A673 (cell line): ENCODE measurements at regions of chr16 and their contacts with region 1.

Region 1: GRCh38 chr16:6066652-6067051 is 969.1 kb upstream of the EEF2KMT start:
- DNase-seq: no peak
- H3K4me3 ChIP-seq: no peak overlapping the region
- H3K27ac ChIP-seq: no peak overlapping the region
- H3K4me1 ChIP-seq: no peaks in the 10 kb centered on the region
- H3K27me3 ChIP-seq: no peaks in the 10 kb centered on the region
- CTCF ChIP-seq: no peak

Region 2: DNA sequence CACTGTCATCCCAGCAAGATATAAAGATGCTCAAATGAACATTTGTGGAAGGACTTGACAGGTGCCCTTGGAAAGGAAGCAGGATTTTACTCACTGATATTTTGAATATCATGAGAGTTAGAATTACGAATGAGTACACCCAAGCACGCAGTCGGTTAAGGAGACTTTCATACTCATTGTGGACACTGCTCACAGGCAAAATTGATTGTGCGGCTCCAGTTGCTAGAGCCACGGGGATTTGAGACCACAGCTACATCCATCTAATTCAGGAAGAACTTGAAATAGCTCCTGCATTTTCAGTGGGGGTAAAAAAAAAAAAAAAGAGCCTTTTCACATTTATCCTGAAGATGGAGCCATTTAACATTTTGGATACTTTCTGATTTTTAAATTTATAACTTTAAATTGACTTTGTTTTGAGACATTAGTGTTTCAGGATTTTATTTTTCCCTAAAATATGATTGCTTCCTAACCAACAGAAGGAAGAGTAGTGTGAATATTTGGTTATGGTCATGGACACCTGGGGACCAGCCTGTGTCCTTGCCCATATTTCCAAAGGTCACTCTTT is 111.0 kb after region 1 on chr16:
- CTCF ChIA-PET with region 1: no interaction called
- POLR2A ChIA-PET with region 1: interaction called, 10 read pairs
- intact Hi-C with region 1: no loop called
- DNase-seq: no peak
- H3K4me3 ChIP-seq: no peak overlapping the region
- H3K27ac ChIP-seq: no peak overlapping the region
- H3K4me1 ChIP-seq: no peaks in the 10 kb centered on the region
- H3K27me3 ChIP-seq: no peaks in the 10 kb centered on the region
- CTCF ChIP-seq: no peak

Region 3: GRCh38 chr16:6209355-6209930 is 142.8 kb after region 1 on chr16:
- CTCF ChIA-PET with region 1: no interaction called
- POLR2A ChIA-PET with region 1: no interaction called
- intact Hi-C with region 1: no loop called
- DNase-seq: no peak
- H3K4me3 ChIP-seq: no peak overlapping the region
- H3K27ac ChIP-seq: no peak overlapping the region
- H3K4me1 ChIP-seq: no peaks in the 10 kb centered on the region
- H3K27me3 ChIP-seq: no peaks in the 10 kb centered on the region
- CTCF ChIP-seq: no peak